Heart right ventricle (tissue), 16 donors: ENCODE measurements at regions of chr6 and their contacts with region 1.

Region 1: DNA sequence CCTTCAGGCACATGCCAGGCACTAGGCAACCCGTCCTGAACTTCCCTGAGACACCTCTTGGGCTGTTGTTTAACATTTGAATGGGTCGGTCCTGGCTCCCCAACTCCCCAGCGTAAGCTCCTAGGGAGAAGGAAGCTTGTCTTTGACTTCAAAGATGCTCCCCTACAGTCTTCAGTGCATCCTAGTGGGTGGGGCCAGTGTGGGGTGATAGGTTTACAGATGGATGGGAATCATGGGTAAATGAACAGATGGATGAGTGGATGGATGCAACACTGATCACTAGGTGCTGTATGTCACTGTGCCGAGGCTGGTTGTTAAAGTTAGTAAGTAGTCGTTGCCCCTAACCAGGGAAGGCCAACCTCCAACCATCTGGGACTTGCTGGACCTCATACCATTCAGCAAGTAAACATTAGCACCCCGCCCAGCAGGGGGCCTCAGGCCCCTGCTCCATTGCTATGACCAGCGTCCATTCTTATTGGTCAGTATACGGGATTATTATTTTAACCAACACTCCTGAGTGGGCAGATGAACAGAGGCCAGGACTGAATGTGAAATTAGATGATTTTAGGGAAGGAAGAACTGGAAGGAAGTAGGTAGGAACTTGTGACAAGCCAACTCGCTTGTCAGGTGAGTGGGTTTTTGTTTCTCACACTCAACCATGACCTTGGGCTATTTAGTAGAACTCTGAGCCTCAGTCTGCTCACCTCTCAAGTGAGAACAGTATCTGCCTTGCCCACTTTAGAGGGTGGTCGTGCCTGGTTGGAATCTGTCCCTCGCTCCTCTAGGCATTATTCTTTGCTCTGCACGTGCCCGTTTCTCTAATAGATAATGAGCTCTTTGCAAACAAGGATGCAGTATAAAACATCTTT is 82.9 kb upstream of the FOXP4 start:
- DNase-seq: peak; percentile 74
- ATAC-seq: peak; percentile 85 to 96 (median 91)
- H3K4me3 ChIP-seq: no peak overlapping the region
- H3K27ac ChIP-seq: no peak overlapping the region
- H3K4me1 ChIP-seq: peaks cover 0 to 4% (median 0%) of the 10 kb centered on the region in 9 donors
- H3K27me3 ChIP-seq: peaks cover 0 to 13% (median 4%) of the 10 kb centered on the region in 7 donors
- CTCF ChIP-seq: peak; percentile 45 to 85 (median 76)

Region 2: GRCh38 chr6:41591859-41592502 is 128.7 kb after region 1 on chr6:
- intact Hi-C with region 1: loop called (anchors 1 to 5 kb)
- DNase-seq: peak; percentile 72 to 73
- ATAC-seq: peak; percentile 37 to 81 (median 60)
- H3K4me3 ChIP-seq: no peak overlapping the region
- H3K27ac ChIP-seq: no peak overlapping the region
- H3K4me1 ChIP-seq: peaks cover 0 to 8% (median 0%) of the 10 kb centered on the region in 9 donors
- H3K27me3 ChIP-seq: no peaks in the 10 kb centered on the region
- CTCF ChIP-seq: peak; percentile 90 to 97 (median 92)